A549 (cell line): ENCODE measurements at regions of chr5 and their contacts with region 1.

Region 1: GRCh38 chr5:83731638-83732037 is 11.0 kb upstream of the HAPLN1 start:
- DNase-seq: no peak
- ATAC-seq: no peak
- H3K4me3 ChIP-seq: no peak overlapping the region
- H3K27ac ChIP-seq: no peak overlapping the region
- H3K4me1 ChIP-seq: no peaks in the 10 kb centered on the region
- CTCF ChIP-seq: no peak
- EP300 ChIP-seq: no peak
- POLR2A ChIP-seq: no peak
- RAD21 ChIP-seq: no peak

Region 2: GRCh38 chr5:82278095-82278918 is 1453.3 kb before region 1 on chr5 and contains the start of gene RPS23:
- CTCF ChIA-PET with region 1: no interaction called
- POLR2A ChIA-PET with region 1: interaction called, 12 read pairs
- DNase-seq: peak; percentile 78 to 93
- ATAC-seq: peak; percentile 86 to 93
- H3K4me3 ChIP-seq: peak within 1 kb of the TSS; percentile 82
- H3K27ac ChIP-seq: peak within 1 kb of the TSS; percentile 96
- H3K4me1 ChIP-seq: peaks cover 19% of the 10 kb centered on the region; the same call in 2 of the 3 replicates
- CTCF ChIP-seq: no peak
- EP300 ChIP-seq: no peak
- POLR2A ChIP-seq: peak; percentile 76
- RAD21 ChIP-seq: no peak
- polyA plus RNA-seq, gene RPS23: 4,926 and 5,033 TPM in 2 replicates

Region 3: GRCh38 chr5:83701886-83702285 is 29.8 kb before region 1 on chr5:
- CTCF ChIA-PET with region 1: no interaction called
- POLR2A ChIA-PET with region 1: no interaction called
- DNase-seq: no peak
- ATAC-seq: no peak
- H3K4me3 ChIP-seq: no peak overlapping the region
- H3K27ac ChIP-seq: no peak overlapping the region
- H3K4me1 ChIP-seq: no peaks in the 10 kb centered on the region
- CTCF ChIP-seq: no peak
- EP300 ChIP-seq: no peak
- POLR2A ChIP-seq: no peak
- RAD21 ChIP-seq: no peak

Region 4: DNA sequence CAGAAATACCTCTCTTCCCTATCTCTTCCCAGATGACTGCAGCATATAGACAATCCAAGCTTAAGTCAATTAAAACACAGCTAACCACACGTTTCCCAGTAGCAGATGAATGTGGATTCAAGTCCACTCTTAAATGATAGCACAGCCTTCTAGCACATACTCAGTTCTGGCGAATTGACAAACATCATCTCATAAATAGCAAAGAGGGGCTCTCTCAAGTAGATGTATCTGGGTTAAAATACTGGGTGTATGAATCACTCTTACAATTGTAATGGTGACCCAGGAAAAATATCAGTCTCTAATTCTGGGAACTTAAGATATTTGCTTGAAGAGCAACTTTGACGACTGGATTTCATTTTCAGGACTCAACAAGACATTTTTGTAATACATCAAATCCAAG is 56.0 kb after region 1 on chr5:
- CTCF ChIA-PET with region 1: no interaction called
- POLR2A ChIA-PET with region 1: no interaction called
- DNase-seq: no peak
- ATAC-seq: no peak
- H3K4me3 ChIP-seq: no peak overlapping the region
- H3K27ac ChIP-seq: no peak overlapping the region
- H3K4me1 ChIP-seq: no peaks in the 10 kb centered on the region
- CTCF ChIP-seq: no peak
- EP300 ChIP-seq: no peak
- POLR2A ChIP-seq: no peak
- RAD21 ChIP-seq: no peak